ENCODE measurements at regions of chr17 and their contacts with region 1.

Region 1: GRCh38 chr17:56939901-56940343 is 20.9 kb downstream of the COIL start:
- DNase-seq: no peak
- H3K4me3 Mint-ChIP-seq: no peak overlapping the region
- H3K27ac Mint-ChIP-seq: no peak overlapping the region
- H3K4me1 Mint-ChIP-seq: peaks cover 13% of the 10 kb centered on the region
- H3K27me3 Mint-ChIP-seq: no peaks in the 10 kb centered on the region

Region 2: GRCh38 chr17:56891784-56892183 is 48.1 kb before region 1 on chr17:
- CTCF ChIA-PET with region 1: interaction called, 44 read pairs
- POLR2A ChIA-PET with region 1: interaction called, 3 read pairs
- intact Hi-C with region 1: loop called (anchors 1 kb)
- DNase-seq: peak; percentile 62
- H3K4me3 Mint-ChIP-seq: no peak overlapping the region
- H3K27ac Mint-ChIP-seq: no peak overlapping the region
- H3K4me1 Mint-ChIP-seq: no peaks in the 10 kb centered on the region
- H3K27me3 Mint-ChIP-seq: no peaks in the 10 kb centered on the region

Region 3: GRCh38 chr17:56913864-56914640 is 25.9 kb before region 1 on chr17 and contains the start of gene TRIM25:
- CTCF ChIA-PET with region 1: interaction called, 10 read pairs
- POLR2A ChIA-PET with region 1: interaction called, 4 read pairs
- intact Hi-C with region 1: no loop called
- DNase-seq: peak; percentile 96
- H3K4me3 Mint-ChIP-seq: peak within 1 kb of the TSS; percentile 87
- H3K27ac Mint-ChIP-seq: peak within 1 kb of the TSS; percentile 94
- H3K4me1 Mint-ChIP-seq: peaks cover 55% of the 10 kb centered on the region
- H3K27me3 Mint-ChIP-seq: no peaks in the 10 kb centered on the region
- total RNA-seq, gene TRIM25: 106 to 126 TPM

Measured in activated CD4-positive, alpha-beta memory T cell treated with anti-CD3 and anti-CD28 coated beads for 36 hours (primary cell).